Activated T-helper 1 cell treated with anti-CD3 and anti-CD28 coated beads, Interleukin-12 subunit alpha, Interleukin-12 subunit beta, Interleukin-2, Interleukin-4 antibody, amounts not matched to agents 30 ng/mL and 10 ng/mL and 1 ng/mL, durations not matched to agents 14 hours and 24 hours and 36 hours (primary cell): ENCODE measurements at regions of chr2 and their contacts with region 1.

Region 1: GRCh38 chr2:74553892-74554645 is at the start of gene LOXL3:
- DNase-seq: peak; percentile 77
- H3K4me3 Mint-ChIP-seq: peak within 1 kb of the TSS; percentile 95
- H3K27ac Mint-ChIP-seq: peak within 1 kb of the TSS; percentile 96
- H3K4me1 Mint-ChIP-seq: peaks cover 33% of the 10 kb centered on the region
- H3K27me3 Mint-ChIP-seq: peaks cover 11% of the 10 kb centered on the region
- total RNA-seq, gene LOXL3: 1.9 and 2.0 TPM in 2 replicates

Region 2: DNA sequence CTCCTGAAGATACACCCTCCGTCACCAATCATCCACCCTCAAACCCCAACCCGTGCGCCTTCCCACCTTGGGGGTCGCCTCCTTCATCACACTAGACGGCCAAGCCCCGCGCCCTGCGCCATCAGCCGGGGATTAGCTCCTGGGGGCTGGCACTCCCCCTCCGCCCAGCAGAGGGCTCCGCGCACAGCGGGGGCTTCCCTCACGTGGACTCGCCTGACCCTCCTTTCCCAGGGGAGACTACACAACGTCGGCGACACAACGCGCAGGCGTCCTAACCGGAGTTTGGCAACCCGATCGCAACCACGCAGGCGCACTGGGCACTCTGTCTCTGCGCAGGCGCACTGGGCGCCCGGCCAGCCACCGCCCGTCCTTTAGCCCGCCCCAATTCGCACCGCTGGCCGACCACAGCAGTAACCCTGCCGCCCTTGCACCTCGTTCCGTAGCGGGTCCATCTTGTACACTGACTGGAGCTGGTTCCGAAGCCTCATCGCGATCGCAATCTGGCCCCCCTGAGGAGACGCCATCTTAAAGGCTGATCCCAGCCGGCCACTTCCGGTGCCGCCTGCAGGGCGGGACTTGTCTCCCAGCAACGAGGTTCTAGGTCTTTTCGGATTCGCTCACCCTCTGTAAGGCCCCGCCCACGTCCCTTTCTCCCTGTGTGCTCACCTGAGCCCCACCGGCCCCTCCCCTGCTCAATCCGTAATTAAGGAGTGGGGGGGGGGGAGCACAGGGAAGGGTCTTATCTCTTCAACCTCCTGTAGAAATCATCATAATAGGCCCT is 46.7 kb before region 1 on chr2 and contains the start of gene PCGF1:
- intact Hi-C with region 1: loop called (anchors 1 kb)
- DNase-seq: peak; percentile 96
- H3K4me3 Mint-ChIP-seq: peak within 1 kb of the TSS; percentile 96
- H3K27ac Mint-ChIP-seq: peak within 1 kb of the TSS; percentile 99
- H3K4me1 Mint-ChIP-seq: peaks cover 55% of the 10 kb centered on the region
- H3K27me3 Mint-ChIP-seq: peaks cover 24% of the 10 kb centered on the region
- total RNA-seq, gene PCGF1: 41.9 and 45.0 TPM in 2 replicates

Region 3: DNA sequence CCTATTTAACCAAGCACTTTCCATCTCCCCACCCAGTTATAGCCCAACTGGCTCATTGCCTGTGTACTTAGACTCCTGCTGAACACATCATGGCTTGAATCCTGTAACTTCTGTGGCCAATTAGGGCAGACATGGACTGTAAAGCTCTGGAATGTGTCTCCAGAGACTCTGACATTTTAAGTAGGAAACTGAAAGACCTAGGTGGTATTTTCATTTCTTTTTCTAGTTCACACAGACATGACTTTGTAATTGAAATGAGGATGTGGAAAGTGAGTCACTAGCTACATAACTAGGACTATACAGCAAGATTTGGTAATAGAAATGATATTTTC is 12.7 kb after region 1 on chr2:
- intact Hi-C with region 1: loop called (anchors 1 kb)
- DNase-seq: no peak
- H3K4me3 Mint-ChIP-seq: peak overlapping the region; percentile 23
- H3K27ac Mint-ChIP-seq: peak overlapping the region; percentile 79
- H3K4me1 Mint-ChIP-seq: peaks cover 61% of the 10 kb centered on the region
- H3K27me3 Mint-ChIP-seq: no peaks in the 10 kb centered on the region

Region 4: DNA sequence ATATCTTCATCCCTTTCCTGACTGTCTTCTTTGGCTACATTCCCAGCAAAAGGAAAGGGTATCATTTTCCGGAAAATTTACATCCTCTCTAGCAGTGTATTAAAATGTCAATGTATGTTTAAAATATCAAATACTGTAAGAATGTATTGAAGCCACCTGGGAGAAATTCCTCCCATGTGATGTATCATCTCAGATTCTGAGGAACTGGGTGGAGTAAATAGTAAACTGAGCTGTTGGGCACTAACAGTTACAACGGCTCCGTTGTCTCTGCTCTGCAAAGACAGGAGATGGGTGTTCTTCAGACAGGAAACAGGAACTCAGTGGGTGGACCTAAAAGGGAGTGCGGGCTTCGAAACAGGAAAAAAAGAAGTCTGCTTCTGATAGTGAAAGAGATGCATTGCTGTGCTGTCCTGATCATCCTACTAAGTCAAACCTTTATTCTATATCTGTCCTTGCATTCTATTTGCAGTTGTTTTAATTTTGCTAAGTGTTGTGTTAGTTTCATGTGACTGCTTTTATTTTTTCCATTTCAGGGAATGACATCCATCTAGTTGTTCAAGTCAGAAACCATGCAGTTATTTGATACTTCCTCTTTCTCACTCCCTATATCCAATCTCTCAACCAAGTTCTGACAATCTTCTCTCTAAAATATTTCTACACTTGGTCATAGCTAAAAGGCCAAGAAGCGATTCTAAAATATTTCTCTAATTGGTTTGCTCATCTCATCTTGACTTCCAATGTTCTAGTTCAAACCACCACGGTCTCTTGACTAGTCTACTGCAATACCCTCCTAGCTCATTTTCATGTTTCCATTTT is 19.9 kb after region 1 on chr2:
- intact Hi-C with region 1: loop called (anchors 1 kb)
- DNase-seq: peak; percentile 31
- H3K4me3 Mint-ChIP-seq: peak overlapping the region; percentile 20
- H3K27ac Mint-ChIP-seq: peak overlapping the region; percentile 27
- H3K4me1 Mint-ChIP-seq: peaks cover 53% of the 10 kb centered on the region
- H3K27me3 Mint-ChIP-seq: no peaks in the 10 kb centered on the region